ENCODE measurements at regions of chr7 and their contacts with region 1.

Region 1: DNA sequence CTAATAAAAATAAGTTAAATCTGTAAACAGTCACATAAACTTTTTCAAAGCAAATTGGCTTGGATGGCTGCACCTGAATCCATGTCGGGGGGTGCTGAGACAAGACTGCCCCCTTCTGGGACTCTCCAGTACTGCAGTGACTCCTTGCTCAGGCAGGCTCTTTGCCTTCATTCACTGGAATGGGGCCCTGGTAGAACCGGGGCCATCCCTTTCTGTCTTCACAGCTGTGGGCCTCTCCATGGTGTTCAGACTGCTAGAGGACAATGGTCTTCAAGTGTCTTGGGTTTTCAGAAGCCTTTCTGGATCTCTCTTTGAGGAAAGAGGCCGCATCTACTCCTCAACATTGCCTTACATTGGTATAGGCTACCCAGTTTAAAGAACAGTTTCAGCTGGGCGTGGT is 16.1 kb upstream of the IMPDH1 start:
- DNase-seq: peak; percentile 59 to 85 (median 73)
- ATAC-seq: peak; percentile 90
- H3K4me3 ChIP-seq: no peak overlapping the region
- H3K4me3 Mint-ChIP-seq: no peak overlapping the region
- H3K27ac ChIP-seq: no peak overlapping the region
- H3K27ac Mint-ChIP-seq: no peak overlapping the region
- H3K4me1 ChIP-seq: peaks cover 0 to 2% of the 10 kb centered on the region in 2 donors
- H3K4me1 Mint-ChIP-seq: peaks cover 0 to 16% (median 0%) of the 10 kb centered on the region in 7 donors
- H3K27me3 ChIP-seq: no peaks in the 10 kb centered on the region
- H3K27me3 Mint-ChIP-seq: peaks cover 0 to 8% (median 5%) of the 10 kb centered on the region in 5 donors

Region 2: DNA sequence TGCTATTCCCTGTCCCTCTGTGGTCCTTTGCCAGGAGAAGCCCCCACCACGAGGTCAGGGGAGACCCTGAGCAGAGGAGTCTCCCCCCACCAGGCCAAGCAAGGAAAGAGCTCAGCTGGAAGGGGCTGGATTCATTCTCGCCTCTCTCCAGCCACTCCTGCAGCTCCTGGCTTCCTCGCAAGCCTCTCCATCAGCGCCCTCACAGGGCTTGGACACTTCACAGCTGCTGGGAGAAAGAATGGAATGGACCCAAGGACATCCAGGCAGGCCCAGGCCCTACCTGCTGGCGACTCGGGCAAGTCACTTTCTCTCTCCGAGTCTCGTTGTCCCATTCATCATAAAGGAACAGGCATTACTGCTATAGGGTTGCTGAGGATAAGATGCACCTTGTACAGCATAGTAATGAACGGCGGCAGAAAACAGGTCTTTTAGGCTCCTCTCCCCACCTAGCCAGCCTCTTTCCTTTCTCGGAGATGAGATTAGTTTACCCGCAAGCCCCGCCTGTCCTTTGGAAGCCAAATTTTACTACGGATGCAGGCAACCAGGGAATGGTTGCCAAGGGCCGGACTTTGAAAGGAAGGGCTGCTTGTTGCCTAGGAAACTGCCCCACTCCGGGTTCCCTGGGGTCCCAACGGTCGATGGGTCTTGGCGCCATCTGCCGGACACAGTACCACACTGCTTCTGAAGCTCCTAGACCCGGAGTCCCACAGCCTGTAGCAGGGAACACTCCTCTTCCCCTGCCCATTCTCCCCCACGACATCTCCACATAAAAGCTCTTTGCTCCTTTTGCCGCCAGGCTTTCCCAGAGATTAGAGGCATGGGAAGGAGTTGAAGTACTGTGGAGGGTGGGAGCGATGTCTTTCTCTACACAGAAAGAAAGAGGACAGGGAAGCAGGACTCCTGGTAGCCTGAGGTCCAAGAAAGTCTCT is 38.4 kb before region 1 on chr7:
- CTCF ChIA-PET with region 1: interaction called, 7 read pairs
- POLR2A ChIA-PET with region 1: no interaction called
- intact Hi-C with region 1: loop called in 1 of 2 experiments (anchors 5 kb)
- DNase-seq: peak; percentile 31 to 67 (median 48)
- ATAC-seq: peak; percentile 87
- H3K4me3 ChIP-seq: no peak overlapping the region
- H3K4me3 Mint-ChIP-seq: no peak overlapping the region
- H3K27ac ChIP-seq: no peak overlapping the region
- H3K27ac Mint-ChIP-seq: no peak overlapping the region
- H3K4me1 ChIP-seq: no peaks in the 10 kb centered on the region
- H3K4me1 Mint-ChIP-seq: peaks cover 0 to 6% (median 1%) of the 10 kb centered on the region in 7 donors
- H3K27me3 ChIP-seq: no peaks in the 10 kb centered on the region
- H3K27me3 Mint-ChIP-seq: peaks cover 0 to 4% (median 0%) of the 10 kb centered on the region in 5 donors

Region 3: DNA sequence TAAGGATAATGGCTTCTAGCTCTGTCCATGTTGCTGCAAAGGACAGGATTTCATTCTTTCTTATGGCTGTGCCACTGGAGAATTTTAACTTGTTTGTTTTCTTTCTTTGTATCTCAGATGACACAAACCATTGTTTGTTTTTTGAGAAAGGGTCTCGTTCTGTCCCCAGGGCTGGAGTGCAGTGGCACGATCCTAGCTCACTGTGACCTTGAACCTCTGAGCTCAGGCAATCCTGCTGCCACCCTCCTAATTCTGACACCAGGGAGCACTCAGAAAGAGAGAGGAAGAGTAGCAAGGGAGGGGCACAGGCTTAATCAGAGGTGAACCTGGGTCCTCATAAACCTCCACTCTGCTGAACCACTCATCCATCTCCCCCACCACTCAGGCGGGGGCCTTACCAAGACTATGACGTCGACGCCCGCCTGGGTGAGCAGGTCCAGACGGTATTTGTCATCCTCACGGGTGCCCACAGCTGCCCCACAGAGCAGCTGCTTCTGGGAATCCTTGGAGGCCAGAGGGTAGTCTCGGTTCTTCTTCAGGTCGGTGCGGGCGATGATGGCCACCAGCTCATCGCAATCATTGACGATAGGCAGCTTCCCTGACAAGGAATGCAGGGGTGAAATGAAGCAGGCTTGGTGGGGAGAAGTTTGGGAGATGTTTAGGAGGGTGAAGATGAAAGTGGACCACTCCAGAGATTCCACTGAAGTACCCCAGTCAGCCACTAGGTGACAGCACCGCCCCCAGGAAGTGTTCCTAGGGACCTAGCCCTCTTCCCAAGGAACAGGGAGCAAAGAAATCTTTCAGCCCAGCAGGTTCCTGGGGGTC is 27.6 kb before region 1 on chr7:
- CTCF ChIA-PET with region 1: interaction called, 163 read pairs
- POLR2A ChIA-PET with region 1: interaction called, 7 read pairs
- intact Hi-C with region 1: loop called (anchors 1 kb)
- DNase-seq: peak in 2 of 9 donors; percentile 33 to 55
- ATAC-seq: peak; percentile 71
- H3K4me3 ChIP-seq: no peak overlapping the region
- H3K4me3 Mint-ChIP-seq: no peak overlapping the region
- H3K27ac ChIP-seq: no peak overlapping the region
- H3K27ac Mint-ChIP-seq: no peak overlapping the region
- H3K4me1 ChIP-seq: no peaks in the 10 kb centered on the region
- H3K4me1 Mint-ChIP-seq: peaks cover 0 to 8% (median 5%) of the 10 kb centered on the region in 7 donors
- H3K27me3 ChIP-seq: no peaks in the 10 kb centered on the region
- H3K27me3 Mint-ChIP-seq: no peaks in the 10 kb centered on the region

Region 4: DNA sequence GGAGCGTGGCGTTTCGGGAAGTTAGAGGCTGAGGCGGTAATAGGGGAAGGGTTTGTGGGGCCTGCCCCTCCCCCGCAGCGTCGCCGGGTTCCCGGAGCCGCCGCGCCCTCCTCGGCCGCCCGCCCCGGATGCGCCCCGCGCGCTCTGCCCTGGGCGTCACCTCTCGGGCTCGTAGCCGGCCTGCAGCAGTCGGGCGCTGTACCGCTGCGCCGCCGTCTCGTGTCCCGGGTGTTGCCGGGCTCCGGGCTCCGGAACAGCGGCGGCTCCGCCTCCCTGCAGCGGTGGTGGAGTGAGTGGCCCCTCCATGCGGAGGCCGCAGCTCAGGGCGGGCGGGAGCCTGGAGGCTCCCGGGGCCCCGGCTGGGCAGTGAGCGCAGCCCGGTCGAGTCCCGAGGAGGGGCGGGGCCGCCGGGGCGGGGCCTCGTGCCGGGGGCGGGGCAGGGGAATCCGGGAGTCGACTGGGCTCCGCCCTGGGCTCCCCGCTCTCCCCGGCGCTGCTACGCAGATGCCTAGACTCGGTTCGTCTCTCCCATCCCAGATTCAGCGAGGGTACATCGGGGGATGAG is 16.2 kb before region 1 on chr7 and contains the start of gene IMPDH1:
- CTCF ChIA-PET with region 1: interaction called, 163 read pairs
- POLR2A ChIA-PET with region 1: interaction called, 4 read pairs
- intact Hi-C with region 1: loop called (anchors 1 kb)
- DNase-seq: peak; percentile 73 to 95 (median 83)
- ATAC-seq: peak; percentile 87
- H3K4me3 ChIP-seq: peak within 1 kb of the TSS; percentile 89
- H3K4me3 Mint-ChIP-seq: peak within 1 kb of the TSS; percentile 88 to 95 (median 92)
- H3K27ac ChIP-seq: peak within 1 kb of the TSS; percentile 81
- H3K27ac Mint-ChIP-seq: peak within 1 kb of the TSS; percentile 87 to 93 (median 90)
- H3K4me1 ChIP-seq: peaks cover 15 to 27% of the 10 kb centered on the region in 2 donors
- H3K4me1 Mint-ChIP-seq: peaks cover 12 to 41% (median 38%) of the 10 kb centered on the region in 7 donors
- H3K27me3 ChIP-seq: no peaks in the 10 kb centered on the region
- H3K27me3 Mint-ChIP-seq: peaks cover 0 to 26% (median 0%) of the 10 kb centered on the region in 5 donors
- total RNA-seq, gene IMPDH1: 36.5 to 92.0 (median 44.4) TPM

Region 5: DNA sequence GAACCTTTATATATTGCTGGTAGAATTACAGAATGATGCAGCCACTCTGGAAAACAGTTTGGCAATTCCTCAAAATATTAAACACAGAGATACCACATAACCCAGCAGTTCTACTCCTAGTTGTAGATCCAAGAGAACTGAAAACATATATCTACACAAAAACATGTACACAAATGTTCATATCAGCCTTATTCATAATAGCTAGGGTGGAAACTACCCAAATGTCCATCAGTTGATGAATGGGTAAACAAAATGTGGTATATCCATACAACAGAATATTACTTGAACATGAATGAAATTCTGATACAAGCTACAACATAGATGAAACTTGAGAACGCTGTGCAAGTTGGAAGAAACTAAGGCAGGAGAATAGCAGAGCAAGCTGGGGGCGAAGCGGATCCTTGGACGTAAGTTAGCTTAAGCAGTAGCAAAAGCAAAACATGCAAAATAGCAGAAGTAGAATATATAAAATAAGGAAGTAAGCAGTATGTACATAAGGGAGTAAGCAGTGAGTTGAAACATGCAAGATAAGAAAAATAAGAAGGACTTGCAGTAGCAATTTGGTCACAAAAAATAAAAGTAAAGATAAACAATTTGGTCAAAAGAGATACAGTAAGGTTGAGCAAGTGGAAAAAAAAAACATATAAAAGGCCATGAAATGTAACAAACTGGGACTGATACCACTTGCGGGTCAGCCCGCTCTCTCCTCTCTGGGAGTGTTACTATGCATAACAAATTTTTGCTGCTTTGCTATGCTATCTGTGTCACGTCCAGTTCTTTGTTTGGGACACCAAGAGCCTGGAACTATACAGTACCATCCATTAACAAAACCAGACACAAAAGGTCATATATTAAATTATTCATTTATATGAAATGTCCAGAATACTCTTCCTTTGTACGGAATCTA is 11.8 kb after region 1 on chr7:
- CTCF ChIA-PET with region 1: interaction called, 16 read pairs
- POLR2A ChIA-PET with region 1: no interaction called
- intact Hi-C with region 1: no loop called
- DNase-seq: no peak
- ATAC-seq: peak; percentile 72
- H3K4me3 ChIP-seq: no peak overlapping the region
- H3K4me3 Mint-ChIP-seq: no peak overlapping the region
- H3K27ac ChIP-seq: no peak overlapping the region
- H3K27ac Mint-ChIP-seq: no peak overlapping the region
- H3K4me1 ChIP-seq: no peaks in the 10 kb centered on the region
- H3K4me1 Mint-ChIP-seq: peaks cover 0 to 3% (median 0%) of the 10 kb centered on the region in 7 donors
- H3K27me3 ChIP-seq: no peaks in the 10 kb centered on the region
- H3K27me3 Mint-ChIP-seq: peaks cover 0 to 15% (median 0%) of the 10 kb centered on the region in 5 donors

Region 6: DNA sequence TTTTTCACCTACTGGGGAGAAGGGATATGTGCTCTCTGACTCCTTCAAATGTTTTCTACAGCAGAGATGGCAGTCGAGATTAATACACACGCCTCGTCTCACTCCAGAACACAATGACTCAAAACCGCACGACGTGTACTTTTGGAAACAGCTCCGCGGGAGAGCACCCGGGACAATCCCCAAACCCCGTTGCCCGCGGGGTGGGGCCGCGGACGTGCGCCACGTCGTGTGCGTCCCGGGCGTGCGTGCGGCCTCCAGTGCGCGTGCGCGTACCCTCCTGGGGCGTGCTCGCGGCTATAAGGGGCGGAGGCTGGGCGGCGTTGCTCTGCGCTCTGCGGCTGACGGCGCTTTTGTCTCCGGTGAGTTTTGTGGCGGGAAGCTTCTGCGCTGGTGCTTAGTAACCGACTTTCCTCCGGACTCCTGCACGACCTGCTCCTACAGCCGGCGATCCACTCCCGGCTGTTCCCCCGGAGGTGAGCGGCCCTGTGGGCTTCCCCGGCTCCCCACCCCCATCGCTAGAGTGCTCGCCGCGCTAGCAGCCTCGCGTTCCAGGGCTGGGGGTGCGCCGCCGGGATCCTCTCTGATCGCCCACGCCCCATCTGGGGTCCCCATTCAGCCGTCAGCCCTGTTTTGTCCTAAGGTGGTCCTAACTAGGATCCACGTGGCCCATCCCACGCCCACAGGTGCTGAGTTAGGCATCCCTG is 29.9 kb after region 1 on chr7 and contains the start of gene HILPDA:
- CTCF ChIA-PET with region 1: interaction called, 204 read pairs
- POLR2A ChIA-PET with region 1: interaction called, 16 read pairs
- intact Hi-C with region 1: loop called (anchors 1 kb)
- DNase-seq: peak; percentile 90 to 98 (median 93)
- ATAC-seq: peak; percentile 95
- H3K4me3 ChIP-seq: peak within 1 kb of the TSS; percentile 85
- H3K4me3 Mint-ChIP-seq: peak within 1 kb of the TSS; percentile 81 to 96 (median 92)
- H3K27ac ChIP-seq: peak within 1 kb of the TSS; percentile 83
- H3K27ac Mint-ChIP-seq: peak within 1 kb of the TSS; percentile 72 to 98 (median 89)
- H3K4me1 ChIP-seq: peaks cover 12 to 22% of the 10 kb centered on the region in 2 donors
- H3K4me1 Mint-ChIP-seq: peaks cover 13 to 65% (median 22%) of the 10 kb centered on the region in 7 donors
- H3K27me3 ChIP-seq: no peaks in the 10 kb centered on the region
- H3K27me3 Mint-ChIP-seq: peaks cover 0 to 8% (median 0%) of the 10 kb centered on the region in 5 donors
- total RNA-seq, gene HILPDA: 2.4 to 39.5 (median 4.4) TPM

Region 7: DNA sequence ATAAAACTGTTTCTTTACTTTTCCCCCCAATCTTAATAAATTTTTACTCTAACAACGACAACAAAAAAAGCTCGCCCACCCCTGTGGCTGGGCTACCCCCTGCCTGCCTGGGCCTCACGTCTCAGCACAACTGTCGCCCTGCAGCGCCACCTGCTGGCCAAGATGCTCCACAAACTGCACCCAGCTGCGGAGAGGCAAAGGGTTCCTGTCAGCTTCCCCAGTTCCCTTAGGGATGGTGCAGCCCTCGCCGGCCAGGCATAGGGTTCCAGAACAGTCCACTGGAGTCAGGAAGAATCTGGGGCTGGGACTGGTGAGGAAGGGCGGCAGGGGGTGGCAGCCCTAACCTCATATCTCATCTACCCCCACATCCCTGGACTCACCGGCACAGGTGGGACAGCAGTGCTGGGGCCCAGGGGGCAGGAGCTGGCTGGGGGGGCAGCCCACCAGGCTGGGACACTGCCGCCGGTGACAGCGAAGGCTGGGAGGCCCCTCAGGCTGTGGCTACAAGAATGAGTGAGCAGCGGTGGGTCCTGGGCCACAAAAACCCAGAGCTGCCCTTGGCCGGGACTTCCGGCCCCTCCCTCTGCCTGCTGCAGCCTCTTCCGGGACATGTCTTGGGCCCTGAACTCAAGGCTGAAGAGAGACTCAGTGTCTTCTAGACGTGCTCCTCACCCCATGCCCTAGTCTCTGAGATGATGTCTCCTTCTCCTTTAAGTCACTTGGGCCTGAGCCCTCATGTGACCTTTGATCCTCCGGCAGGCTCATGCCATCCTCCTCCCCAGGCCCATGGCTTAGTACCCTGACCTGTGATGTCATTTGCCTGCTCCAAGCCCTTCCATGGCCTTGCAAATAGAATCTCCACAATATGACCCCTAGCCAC is 458.0 kb after region 1 on chr7:
- CTCF ChIA-PET with region 1: interaction called, 3 read pairs
- POLR2A ChIA-PET with region 1: no interaction called
- intact Hi-C with region 1: loop called in 1 of 2 experiments (anchors 1 kb)
- DNase-seq: peak; percentile 61 to 88 (median 81)
- ATAC-seq: peak; percentile 82
- H3K4me3 ChIP-seq: peak overlapping the region; percentile 20
- H3K4me3 Mint-ChIP-seq: no peak overlapping the region
- H3K27ac ChIP-seq: no peak overlapping the region
- H3K27ac Mint-ChIP-seq: peak overlapping the region in 1 of 9 donors; percentile 81
- H3K4me1 ChIP-seq: no peaks in the 10 kb centered on the region
- H3K4me1 Mint-ChIP-seq: peaks cover 0 to 3% (median 0%) of the 10 kb centered on the region in 7 donors
- H3K27me3 ChIP-seq: peaks cover 0 to 3% of the 10 kb centered on the region in 2 donors
- H3K27me3 Mint-ChIP-seq: peaks cover 0 to 7% (median 0%) of the 10 kb centered on the region in 5 donors

Measured in naive thymus-derived CD4-positive, alpha-beta T cell (primary cell).